ENCODE measurements at regions of chr7 and their contacts with region 1.

Region 1: GRCh38 chr7:76179686-76180085 is 22.0 kb upstream of the SRRM3 start:
- DNase-seq: no peak
- ATAC-seq: no peak
- H3K4me3 Mint-ChIP-seq: no peak overlapping the region
- H3K27ac Mint-ChIP-seq: no peak overlapping the region
- H3K4me1 Mint-ChIP-seq: no peaks in the 10 kb centered on the region
- H3K27me3 Mint-ChIP-seq: no peaks in the 10 kb centered on the region
- CTCF ChIP-seq: no peak

Region 2: DNA sequence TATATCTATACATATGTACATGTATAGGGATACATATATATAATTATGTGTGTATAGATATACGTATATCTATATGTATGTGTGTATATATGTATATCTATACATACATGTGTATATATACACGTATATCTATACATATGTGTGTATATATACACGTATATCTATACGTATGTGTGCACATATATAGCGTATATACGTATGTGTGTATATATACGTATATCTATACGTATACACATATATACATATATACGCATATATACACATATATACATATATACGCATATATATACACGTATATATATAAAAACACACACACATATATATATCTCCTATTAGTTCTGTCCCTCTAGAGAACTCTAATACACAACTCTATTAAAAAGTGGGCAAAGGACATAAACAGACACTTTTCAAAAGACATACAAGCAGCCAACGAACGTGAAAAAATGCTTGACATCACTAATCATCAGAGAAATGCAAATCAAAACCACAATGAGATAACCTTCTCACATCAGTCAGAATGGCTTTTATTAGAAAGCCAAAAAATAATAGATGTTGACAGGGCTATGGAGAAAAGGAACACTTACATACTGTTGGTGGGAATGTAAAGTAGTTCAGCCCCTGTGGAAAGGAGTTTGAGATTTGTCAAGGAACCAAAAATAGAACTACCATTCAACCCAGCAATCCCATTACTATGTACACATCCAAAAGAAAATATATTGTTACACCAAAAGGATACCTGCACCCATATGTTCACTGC is 163.3 kb before region 1 on chr7:
- CTCF ChIA-PET with region 1: no interaction called
- POLR2A ChIA-PET with region 1: no interaction called
- intact Hi-C with region 1: no loop called
- DNase-seq: no peak
- ATAC-seq: no peak
- H3K4me3 Mint-ChIP-seq: no peak overlapping the region
- H3K27ac Mint-ChIP-seq: no peak overlapping the region
- H3K4me1 Mint-ChIP-seq: peaks cover 8% of the 10 kb centered on the region
- H3K27me3 Mint-ChIP-seq: peaks cover under 1% of the 10 kb centered on the region
- CTCF ChIP-seq: no peak

Region 3: GRCh38 chr7:76122516-76123239 is 57.0 kb before region 1 on chr7:
- CTCF ChIA-PET with region 1: no interaction called
- POLR2A ChIA-PET with region 1: no interaction called
- intact Hi-C with region 1: no loop called
- DNase-seq: no peak
- ATAC-seq: no peak
- H3K4me3 Mint-ChIP-seq: no peak overlapping the region
- H3K27ac Mint-ChIP-seq: no peak overlapping the region
- H3K4me1 Mint-ChIP-seq: peaks cover 9% of the 10 kb centered on the region
- H3K27me3 Mint-ChIP-seq: no peaks in the 10 kb centered on the region
- CTCF ChIP-seq: no peak

Region 4: GRCh38 chr7:76166404-76167255 is 13.1 kb before region 1 on chr7:
- CTCF ChIA-PET with region 1: interaction called, 24 read pairs
- POLR2A ChIA-PET with region 1: interaction called, 5 read pairs
- intact Hi-C with region 1: no loop called
- DNase-seq: peak; percentile 94
- ATAC-seq: peak; percentile 94
- H3K4me3 Mint-ChIP-seq: peak overlapping the region; percentile 83
- H3K27ac Mint-ChIP-seq: peak overlapping the region; percentile 88
- H3K4me1 Mint-ChIP-seq: peaks cover 5% of the 10 kb centered on the region
- H3K27me3 Mint-ChIP-seq: no peaks in the 10 kb centered on the region
- CTCF ChIP-seq: no peak

Region 5: DNA sequence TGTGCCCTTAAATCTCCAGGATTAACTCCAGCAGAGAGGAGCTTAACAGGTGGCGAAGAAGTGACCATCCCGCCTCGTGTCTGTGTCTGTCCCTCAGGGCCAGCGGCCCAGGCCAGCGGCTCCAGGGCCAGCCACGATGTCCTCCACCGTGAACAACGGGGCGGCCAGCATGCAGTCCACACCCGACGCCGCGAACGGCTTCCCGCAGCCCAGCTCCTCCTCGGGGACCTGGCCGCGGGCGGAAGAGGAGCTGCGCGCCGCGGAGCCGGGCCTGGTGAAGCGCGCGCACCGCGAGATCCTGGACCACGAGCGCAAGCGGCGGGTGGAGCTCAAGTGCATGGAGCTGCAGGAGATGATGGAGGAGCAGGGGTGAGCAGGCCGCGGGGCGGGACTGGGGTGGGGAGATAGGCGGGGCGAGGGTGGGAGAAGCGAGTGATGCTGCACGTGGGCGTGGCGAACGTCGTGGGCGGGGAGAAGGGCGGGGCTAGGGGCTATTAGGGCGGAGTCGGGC is 55.3 kb after region 1 on chr7:
- CTCF ChIA-PET with region 1: interaction called, 14 read pairs
- POLR2A ChIA-PET with region 1: interaction called, 3 read pairs
- intact Hi-C with region 1: no loop called
- DNase-seq: peak; percentile 85
- ATAC-seq: peak; percentile 98
- H3K4me3 Mint-ChIP-seq: peak overlapping the region; percentile 36
- H3K27ac Mint-ChIP-seq: no peak overlapping the region
- H3K4me1 Mint-ChIP-seq: peaks cover 6% of the 10 kb centered on the region
- H3K27me3 Mint-ChIP-seq: peaks cover 50% of the 10 kb centered on the region
- CTCF ChIP-seq: no peak

Region 6: DNA sequence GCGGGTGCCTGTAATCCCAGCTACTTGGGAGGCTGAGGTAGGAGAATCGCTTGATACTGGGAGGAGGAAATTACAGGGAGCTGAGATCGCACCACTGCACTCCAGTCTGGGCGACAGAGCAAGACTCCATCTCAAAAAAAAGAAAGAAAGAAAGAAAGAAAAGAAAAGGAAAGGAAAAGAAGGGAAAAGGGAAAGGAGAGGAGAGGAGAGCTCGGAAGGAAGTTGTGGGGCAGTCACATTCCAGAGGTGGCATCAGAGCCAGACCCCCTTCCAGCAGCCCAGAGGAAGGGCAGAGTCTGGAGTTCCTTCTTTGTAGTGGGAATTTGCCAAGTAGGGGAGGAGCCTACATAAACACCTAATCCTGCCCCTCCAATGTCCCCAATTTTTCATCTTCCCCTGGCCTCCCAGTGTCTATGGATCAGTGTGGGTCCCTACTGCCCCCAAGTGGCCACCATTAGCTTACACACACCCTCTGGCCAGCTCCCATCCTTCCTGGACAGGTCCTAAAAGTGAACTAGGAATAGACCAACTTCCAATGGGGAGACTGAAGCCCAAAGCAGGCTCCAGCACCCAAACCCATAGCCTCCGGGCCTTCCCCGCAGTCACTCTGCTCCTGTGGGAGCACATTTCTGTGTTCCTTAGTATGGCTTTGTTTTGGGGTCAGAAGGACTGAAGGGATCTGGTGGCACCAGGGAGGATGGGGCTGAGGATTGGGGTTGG is 83.2 kb after region 1 on chr7:
- CTCF ChIA-PET with region 1: interaction called, 33 read pairs
- POLR2A ChIA-PET with region 1: no interaction called
- intact Hi-C with region 1: loop called (anchors 5 kb)
- DNase-seq: peak; percentile 64
- ATAC-seq: peak; percentile 43
- H3K4me3 Mint-ChIP-seq: no peak overlapping the region
- H3K27ac Mint-ChIP-seq: no peak overlapping the region
- H3K4me1 Mint-ChIP-seq: peaks cover 3% of the 10 kb centered on the region
- H3K27me3 Mint-ChIP-seq: peaks cover 23% of the 10 kb centered on the region
- CTCF ChIP-seq: peak; percentile 63

Region 7: DNA sequence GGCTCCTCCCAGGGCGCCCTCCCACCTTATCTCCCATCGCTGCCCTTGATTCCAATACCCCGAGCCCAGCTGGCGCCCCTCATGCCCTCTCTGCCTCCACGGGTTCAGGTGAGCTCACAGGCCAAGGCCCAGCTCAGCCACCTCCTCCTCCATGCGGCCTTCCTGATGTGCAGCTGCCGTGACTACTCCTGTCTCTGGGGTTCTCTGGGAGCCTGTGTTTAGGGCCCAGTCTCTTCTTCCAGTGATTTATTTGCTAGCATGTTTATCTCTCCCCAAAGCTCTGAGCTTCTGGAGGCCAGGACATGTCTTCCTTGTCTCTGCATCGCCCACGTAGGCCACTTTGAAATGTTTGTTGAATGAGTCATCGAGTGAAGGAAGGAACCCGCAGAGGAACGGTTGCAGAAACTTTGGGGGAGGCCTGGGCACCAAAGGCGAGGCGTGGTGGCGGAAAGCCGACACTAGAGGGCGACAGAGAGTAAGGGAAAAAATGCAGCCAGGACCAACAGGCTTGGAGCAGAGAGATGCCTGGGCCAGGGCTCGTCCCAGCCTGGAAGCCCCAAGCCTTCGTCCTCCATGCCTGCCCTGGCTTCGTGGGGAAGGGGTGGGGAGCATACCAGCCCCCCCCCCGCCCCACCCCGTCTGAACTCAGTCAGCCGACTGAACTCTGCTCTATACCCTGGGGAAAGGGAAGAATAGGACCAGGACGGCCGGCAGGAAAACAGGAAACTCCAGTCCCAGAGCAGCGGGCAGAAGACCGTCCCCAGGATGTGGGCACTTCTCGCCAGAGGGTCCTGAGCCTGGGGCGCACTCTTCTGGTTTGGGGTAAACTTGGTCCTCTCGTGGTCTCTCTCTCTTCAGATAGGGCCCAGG is 111.9 kb after region 1 on chr7:
- CTCF ChIA-PET with region 1: interaction called, 18 read pairs
- POLR2A ChIA-PET with region 1: no interaction called
- intact Hi-C with region 1: no loop called
- DNase-seq: peak; percentile 95
- ATAC-seq: peak; percentile 94
- H3K4me3 Mint-ChIP-seq: peak overlapping the region; percentile 31
- H3K27ac Mint-ChIP-seq: peak overlapping the region; percentile 81
- H3K4me1 Mint-ChIP-seq: peaks cover 13% of the 10 kb centered on the region
- H3K27me3 Mint-ChIP-seq: no peaks in the 10 kb centered on the region
- CTCF ChIP-seq: peak; percentile 96